ENCODE measurements at regions of chr17 and their contacts with region 1.

Region 1: GRCh38 chr17:74961657-74962490 is 10.7 kb downstream of the HID1 start:
- DNase-seq: peak; percentile 91 to 96
- ATAC-seq: peak; percentile 58 to 80
- H3K4me3 ChIP-seq: no peak overlapping the region
- H3K27ac ChIP-seq: 0 out of 6 replicates have a peak overlapping the region, but pooled peaks of 1 of the 2 experiments have one; percentile 9
- H3K4me1 ChIP-seq: peaks cover 12% of the 10 kb centered on the region
- CTCF ChIP-seq: peak; percentile 95
- EP300 ChIP-seq: no peak
- POLR2A ChIP-seq: no peak
- RAD21 ChIP-seq: peak; percentile 97 to 98

Region 2: DNA sequence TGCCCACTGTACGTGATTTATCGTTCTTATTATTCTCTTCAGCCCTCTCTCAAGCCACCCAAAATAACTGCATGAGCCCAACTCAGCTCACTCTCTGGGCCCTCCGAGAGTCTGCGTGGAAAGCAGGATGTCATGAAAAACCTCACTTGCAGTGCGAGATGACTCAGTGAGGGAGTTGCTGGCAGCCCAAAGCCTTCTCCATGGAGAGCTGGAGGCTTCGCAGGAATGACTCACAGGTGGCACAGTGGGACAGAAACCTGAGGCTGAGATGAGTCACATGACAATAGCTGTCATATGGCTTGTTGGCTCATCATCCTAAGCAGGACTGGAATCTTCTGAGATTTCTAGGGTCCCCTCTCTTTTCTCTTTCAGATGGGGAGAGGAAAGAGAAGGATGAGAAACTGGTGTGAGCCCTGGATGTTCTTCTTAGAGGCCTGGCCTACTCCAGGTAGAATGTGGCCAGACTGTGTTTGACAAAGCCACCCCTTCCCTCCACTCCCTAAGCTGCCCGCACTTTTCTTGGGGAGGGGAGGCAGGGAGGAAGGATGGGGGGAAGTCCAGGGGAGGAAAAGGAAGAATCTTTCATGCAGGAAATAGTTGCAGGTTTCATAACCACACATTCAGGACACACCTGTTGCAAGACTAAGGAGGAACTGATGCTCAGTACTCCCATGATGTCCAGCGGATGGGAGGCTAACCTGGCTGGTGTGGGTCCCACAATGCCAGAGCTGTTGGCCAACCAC is 919.0 kb before region 1 on chr17:
- CTCF ChIA-PET with region 1: no interaction called
- POLR2A ChIA-PET with region 1: no interaction called
- DNase-seq: peak; percentile 85 to 99
- ATAC-seq: peak; percentile 93 to 98
- H3K4me3 ChIP-seq: no peak overlapping the region
- H3K27ac ChIP-seq: peak overlapping the region; percentile 11 to 35; a peak in 2 of 6 replicates
- H3K4me1 ChIP-seq: peaks cover 11% of the 10 kb centered on the region
- CTCF ChIP-seq: no peak
- EP300 ChIP-seq: no peak
- POLR2A ChIP-seq: no peak
- RAD21 ChIP-seq: no peak

Region 3: GRCh38 chr17:74864866-74865395 is 96.9 kb before region 1 on chr17:
- CTCF ChIA-PET with region 1: interaction called, 26 read pairs
- POLR2A ChIA-PET with region 1: no interaction called
- DNase-seq: peak; percentile 78 to 85
- ATAC-seq: peak; percentile 49 to 74
- H3K4me3 ChIP-seq: no peak overlapping the region
- H3K27ac ChIP-seq: no peak overlapping the region
- H3K4me1 ChIP-seq: peaks cover 38% of the 10 kb centered on the region
- CTCF ChIP-seq: peak; percentile 77
- EP300 ChIP-seq: no peak
- POLR2A ChIP-seq: no peak
- RAD21 ChIP-seq: peak; percentile 76 to 85

Region 4: DNA sequence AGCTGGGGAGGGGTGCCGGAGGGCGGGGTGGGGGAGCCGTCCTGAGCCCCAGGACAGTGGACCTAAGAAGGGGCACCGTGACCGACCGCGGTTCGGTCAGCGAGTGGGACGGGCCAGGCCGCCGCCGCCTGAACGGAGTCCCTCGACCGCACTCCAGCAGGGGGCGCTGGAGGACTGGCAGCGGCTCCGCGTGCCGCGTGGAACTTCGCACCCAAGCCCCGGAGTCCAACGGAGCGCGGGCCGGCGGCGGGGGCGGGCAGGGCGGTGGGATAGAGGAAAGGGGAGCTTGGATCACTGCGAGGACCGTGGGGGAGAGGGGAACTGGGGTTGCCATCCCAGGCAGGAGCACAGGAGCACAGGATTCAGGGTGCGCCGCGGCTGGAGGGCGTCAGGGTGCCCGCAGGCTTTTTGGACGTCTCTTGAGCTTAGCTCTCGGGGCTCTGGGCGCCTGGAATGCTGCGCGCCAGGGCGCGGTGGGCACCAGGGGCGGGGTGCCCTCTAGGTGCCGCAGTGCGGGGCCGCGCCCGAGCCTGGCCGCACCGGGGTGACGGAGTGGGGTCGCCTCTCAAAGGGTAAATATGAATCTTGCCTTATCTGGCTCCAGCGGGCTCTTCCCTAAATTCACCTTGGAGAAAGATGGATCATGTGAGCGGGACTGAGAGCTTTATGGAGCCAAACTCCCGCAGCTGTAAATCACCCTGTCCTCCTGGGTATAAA is 38.2 kb before region 1 on chr17:
- CTCF ChIA-PET with region 1: interaction called, 1,448 read pairs
- POLR2A ChIA-PET with region 1: interaction called, 3 read pairs
- DNase-seq: peak; percentile 64 to 92
- ATAC-seq: peak; percentile 49 to 80
- H3K4me3 ChIP-seq: peak overlapping the region; percentile 46
- H3K27ac ChIP-seq: peak overlapping the region; percentile 42 to 70; a peak in 5 of 6 replicates
- H3K4me1 ChIP-seq: peaks cover 19% of the 10 kb centered on the region; the same call in 2 of the 3 replicates
- CTCF ChIP-seq: peak; percentile 98
- EP300 ChIP-seq: no peak
- POLR2A ChIP-seq: no peak
- RAD21 ChIP-seq: peak; percentile 88 to 97

Region 5: GRCh38 chr17:74998783-74999182 is 36.9 kb after region 1 on chr17:
- CTCF ChIA-PET with region 1: interaction called, 404 read pairs
- POLR2A ChIA-PET with region 1: no interaction called
- DNase-seq: no peak
- ATAC-seq: no peak; a peak in 1 of 6 replicates
- H3K4me3 ChIP-seq: no peak overlapping the region
- H3K27ac ChIP-seq: no peak overlapping the region
- H3K4me1 ChIP-seq: peaks cover 11% of the 10 kb centered on the region
- CTCF ChIP-seq: no peak
- EP300 ChIP-seq: no peak
- POLR2A ChIP-seq: no peak
- RAD21 ChIP-seq: no peak

Region 6: DNA sequence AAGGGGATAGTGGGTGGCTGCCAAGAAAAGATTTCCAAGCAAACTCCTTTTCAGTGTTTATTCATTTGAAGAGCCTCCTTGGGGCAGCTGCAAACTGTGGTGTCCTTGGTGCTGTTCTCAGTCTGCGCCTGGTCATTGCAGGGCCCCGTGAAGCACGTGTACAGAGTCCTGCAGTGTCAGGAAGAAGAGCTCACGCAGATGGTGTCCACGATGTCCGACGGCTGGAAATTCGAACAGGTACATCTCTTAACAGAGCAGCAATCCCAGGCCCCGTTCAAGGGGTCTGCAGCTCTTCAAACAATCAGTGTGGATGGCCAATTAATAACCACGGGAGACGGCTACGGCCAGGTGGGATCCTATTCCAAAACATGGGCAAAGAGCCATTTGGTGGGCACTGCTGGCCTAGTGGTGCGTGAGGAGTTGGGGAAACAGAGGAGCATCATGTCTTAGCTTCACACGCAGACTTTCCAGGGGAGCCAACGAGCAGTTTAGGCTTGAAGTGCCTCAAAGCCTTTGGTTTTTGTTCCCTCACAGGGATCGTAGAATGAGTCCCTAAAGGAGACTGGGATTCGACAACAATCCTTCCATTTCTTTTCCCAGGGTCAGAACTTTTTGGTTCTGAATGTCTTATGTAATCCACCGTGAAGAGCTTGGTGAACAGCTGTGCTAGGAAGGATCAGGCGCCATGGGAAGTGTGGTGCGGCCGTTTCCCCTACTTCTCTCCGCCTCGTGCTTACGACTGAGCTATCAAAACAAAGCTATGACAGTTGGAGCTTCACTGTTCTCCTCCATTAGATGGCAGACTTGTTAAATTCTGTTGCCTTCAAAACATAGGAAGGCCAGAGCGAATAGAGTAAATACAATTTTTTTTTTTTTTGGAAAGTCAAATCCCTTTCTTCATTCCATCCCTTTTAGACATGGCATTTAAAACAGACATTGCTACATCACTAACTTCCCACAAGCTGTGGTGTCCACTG is 97.8 kb after region 1 on chr17:
- CTCF ChIA-PET with region 1: interaction called, 28 read pairs
- POLR2A ChIA-PET with region 1: no interaction called
- DNase-seq: peak in 1 of 2 experiments; percentile 70
- ATAC-seq: peak; percentile 77 to 85
- H3K4me3 ChIP-seq: no peak overlapping the region
- H3K27ac ChIP-seq: no peak overlapping the region
- H3K4me1 ChIP-seq: no peaks in the 10 kb centered on the region
- CTCF ChIP-seq: peak; percentile 62
- EP300 ChIP-seq: no peak
- POLR2A ChIP-seq: no peak
- RAD21 ChIP-seq: peak; percentile 62 to 71

Region 7: DNA sequence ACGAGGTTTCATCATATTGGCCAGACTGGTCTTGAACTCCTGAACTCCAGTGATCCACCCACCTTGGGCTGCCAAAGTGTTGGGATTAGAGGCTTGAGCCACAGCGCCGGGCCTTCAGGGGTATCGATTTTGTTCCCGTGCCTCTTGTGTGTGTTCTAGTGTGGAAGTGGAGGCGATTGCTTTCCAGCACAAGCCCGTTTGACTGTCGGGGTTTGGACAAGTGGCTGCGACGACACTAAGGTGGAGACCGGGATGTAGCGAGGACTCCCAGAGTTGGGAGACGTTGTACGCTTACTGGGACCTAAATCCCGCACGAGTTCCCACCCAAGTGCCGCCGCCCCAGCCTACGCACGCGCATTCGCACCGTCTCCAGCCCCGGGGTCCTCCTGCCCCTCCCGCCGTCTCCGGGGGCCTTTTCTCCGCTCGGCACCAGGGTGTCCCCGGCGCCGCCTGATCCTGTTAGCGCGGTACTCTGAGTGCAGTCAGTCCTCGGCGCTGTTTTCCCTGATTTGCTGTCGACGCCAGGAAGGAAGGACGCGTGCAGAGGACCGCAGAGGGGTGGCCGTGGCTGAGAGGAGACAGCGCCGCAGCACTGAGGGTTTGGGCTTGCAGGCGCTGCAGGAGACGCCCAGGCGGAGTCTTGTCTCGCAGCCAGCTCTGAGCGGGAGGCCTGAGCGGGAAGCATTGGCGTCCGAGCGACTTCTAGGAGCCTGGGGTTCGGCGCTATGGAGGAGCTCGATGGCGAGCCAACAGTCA is 243.3 kb after region 1 on chr17 and contains the start of gene NUP85:
- CTCF ChIA-PET with region 1: interaction called, 65 read pairs
- POLR2A ChIA-PET with region 1: interaction called, 3 read pairs
- DNase-seq: peak; percentile 99 to 100
- ATAC-seq: peak; percentile 92 to 94
- H3K4me3 ChIP-seq: peak within 1 kb of the TSS; percentile 87
- H3K27ac ChIP-seq: peak within 1 kb of the TSS; percentile 94 to 96
- H3K4me1 ChIP-seq: peaks cover 19% of the 10 kb centered on the region; the same call in 2 of the 3 replicates
- CTCF ChIP-seq: no peak
- EP300 ChIP-seq: no peak; a peak in 1 of 5 replicates
- POLR2A ChIP-seq: peak; percentile 96
- RAD21 ChIP-seq: no peak
- polyA plus RNA-seq, gene NUP85: 110 and 124 TPM in 2 replicates

Region 8: DNA sequence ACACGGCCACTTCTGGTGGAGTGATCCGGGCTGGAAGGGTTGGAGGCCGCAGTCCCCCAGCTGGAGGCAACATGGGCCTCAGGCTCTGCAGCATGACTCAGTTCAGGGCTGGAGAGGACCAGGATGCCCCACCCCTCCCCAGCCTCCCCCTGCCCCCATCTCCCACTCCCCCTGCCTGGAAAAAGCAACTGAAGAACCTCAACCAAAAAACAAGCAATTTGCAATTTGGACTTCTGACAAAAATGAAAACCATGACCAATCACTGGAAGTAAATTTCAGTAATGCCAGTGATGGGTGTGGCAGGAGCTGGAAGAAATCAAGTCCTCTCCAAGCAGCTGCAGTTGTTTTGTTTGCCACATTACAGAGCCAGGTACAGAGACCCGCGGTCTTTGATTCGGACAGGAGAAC is 315.8 kb after region 1 on chr17:
- CTCF ChIA-PET with region 1: no interaction called
- POLR2A ChIA-PET with region 1: no interaction called
- DNase-seq: no peak
- ATAC-seq: 0 out of 6 replicates have a peak, but pooled peaks of 1 of the 2 experiments have one; percentile 17
- H3K4me3 ChIP-seq: no peak overlapping the region
- H3K27ac ChIP-seq: 0 out of 6 replicates have a peak overlapping the region, but pooled peaks of 1 of the 2 experiments have one; percentile 2
- H3K4me1 ChIP-seq: peaks cover 15% of the 10 kb centered on the region
- CTCF ChIP-seq: no peak
- EP300 ChIP-seq: no peak
- POLR2A ChIP-seq: no peak
- RAD21 ChIP-seq: no peak

Region 9: DNA sequence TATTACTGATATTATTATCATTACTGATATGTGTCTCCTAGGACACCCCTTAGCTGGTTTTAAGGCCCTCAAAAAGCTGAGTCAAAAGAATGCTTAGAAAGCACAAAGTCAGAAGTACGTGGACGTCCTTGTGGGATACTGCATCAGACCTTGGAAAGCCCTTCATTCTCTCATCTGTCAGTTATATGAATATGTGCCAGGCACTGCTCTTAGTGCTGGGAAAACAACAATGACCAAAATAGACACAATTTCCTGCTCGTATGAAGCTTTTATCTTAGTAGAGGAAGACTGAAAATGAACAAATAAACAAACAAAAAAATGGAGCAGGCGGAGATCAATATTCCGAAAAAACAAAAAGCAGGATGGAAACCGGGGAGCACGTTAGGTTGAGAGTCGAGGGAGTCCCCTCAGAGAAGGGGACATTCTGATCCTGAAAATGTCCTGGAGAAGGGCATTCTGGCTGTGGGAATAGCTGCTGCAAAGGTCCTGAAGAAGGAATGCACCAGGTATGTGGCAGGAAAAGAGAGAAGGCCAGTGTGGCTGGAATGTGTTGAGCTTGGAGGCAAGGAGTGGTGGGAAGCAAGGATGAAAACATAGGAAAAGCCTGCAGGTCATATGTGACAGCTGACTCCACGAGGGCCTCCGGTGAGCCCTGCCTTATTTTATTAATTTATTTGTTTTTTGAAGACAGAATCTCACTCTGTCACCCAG is 479.0 kb after region 1 on chr17:
- CTCF ChIA-PET with region 1: no interaction called
- POLR2A ChIA-PET with region 1: no interaction called
- DNase-seq: no peak
- ATAC-seq: no peak
- H3K4me3 ChIP-seq: no peak overlapping the region
- H3K27ac ChIP-seq: no peak overlapping the region
- H3K4me1 ChIP-seq: peaks cover 11% of the 10 kb centered on the region
- CTCF ChIP-seq: no peak
- EP300 ChIP-seq: no peak
- POLR2A ChIP-seq: no peak
- RAD21 ChIP-seq: no peak